ENCODE measurements at regions of chr5 and their contacts with region 1.

Region 1: GRCh38 chr5:91419571-91420537 is 36.7 kb upstream of the ARRDC3 start:
- DNase-seq: peak; percentile 55
- ATAC-seq: peak; percentile 50
- H3K4me3 ChIP-seq: no peak overlapping the region
- H3K27ac ChIP-seq: no peak overlapping the region
- H3K4me1 ChIP-seq: no peaks in the 10 kb centered on the region
- H3K27me3 ChIP-seq: no peaks in the 10 kb centered on the region
- CTCF ChIP-seq: peak; percentile 73
- POLR2A ChIP-seq: no peak
- RAD21 ChIP-seq: peak; percentile 76

Region 2: DNA sequence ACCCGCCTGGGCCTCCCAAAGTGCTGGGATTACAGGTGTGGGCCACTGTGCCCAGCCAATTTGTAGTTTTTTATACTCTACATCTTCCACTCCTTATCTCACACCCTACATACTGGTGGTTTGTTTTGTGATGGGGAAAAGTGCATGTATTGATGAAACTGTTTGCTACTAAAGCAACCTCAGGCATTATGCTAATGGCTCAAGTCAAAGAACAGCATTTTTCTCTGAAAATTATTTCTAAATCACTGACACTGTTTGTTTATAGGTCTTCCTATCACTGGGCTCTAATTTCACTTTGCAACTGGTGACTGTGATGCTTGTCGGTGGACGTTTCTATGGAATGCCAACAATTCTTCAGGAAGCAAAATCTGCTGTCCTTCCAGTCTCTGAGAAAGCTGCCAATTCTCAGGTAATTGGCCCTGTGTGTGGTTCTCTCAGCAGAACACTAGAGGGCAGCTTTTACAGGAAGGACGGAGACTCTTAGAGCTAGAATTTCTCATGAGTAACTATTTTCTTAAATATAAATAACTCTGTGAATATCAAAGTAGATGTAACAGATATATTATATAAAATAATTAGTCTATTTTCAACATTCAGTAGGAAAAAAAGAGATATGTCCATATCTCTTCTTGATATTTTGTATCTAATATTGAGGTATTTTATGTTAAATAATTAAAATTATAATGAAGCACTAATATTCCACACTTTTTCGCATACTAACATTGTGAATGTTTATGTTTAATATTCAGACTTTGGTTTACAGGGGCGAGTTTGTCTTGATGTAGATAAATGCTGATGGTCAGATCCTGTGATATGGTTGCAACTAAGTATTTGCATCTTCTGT is 617.2 kb before region 1 on chr5:
- CTCF ChIA-PET with region 1: interaction called, 9 read pairs
- POLR2A ChIA-PET with region 1: no interaction called
- dilution Hi-C with region 1: no loop called
- in situ Hi-C with region 1: no loop called
- intact Hi-C with region 1: loop called (anchors 2 kb)
- DNase-seq: peak; percentile 32
- ATAC-seq: peak; percentile 68
- H3K4me3 ChIP-seq: no peak overlapping the region
- H3K27ac ChIP-seq: no peak overlapping the region
- H3K4me1 ChIP-seq: no peaks in the 10 kb centered on the region
- H3K27me3 ChIP-seq: no peaks in the 10 kb centered on the region; the same call in 1 of the 2 replicates
- CTCF ChIP-seq: peak; percentile 61
- POLR2A ChIP-seq: no peak
- RAD21 ChIP-seq: peak; percentile 30; the same call in 1 of the 2 replicates

Region 3: DNA sequence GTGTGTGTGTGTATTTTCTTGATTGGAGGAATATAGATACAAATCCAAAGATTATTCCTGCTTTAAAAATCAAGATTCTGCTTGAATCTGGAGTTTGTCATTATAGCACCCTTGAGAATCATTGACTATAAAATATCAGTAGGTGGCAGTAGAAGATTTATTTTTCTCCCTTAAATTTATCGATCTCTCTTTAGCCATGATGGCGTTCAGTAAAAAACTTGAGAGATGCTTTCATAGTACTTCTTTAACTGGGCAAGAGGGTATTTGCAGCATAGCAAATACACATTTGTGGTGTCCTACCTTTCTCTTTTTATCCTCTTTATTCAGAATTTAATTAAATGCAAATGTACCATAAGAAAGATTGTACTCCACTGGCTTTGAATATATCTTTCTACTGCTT is 553.5 kb before region 1 on chr5:
- CTCF ChIA-PET with region 1: interaction called, 21 read pairs
- POLR2A ChIA-PET with region 1: no interaction called
- dilution Hi-C with region 1: loop called (anchors 25 kb)
- in situ Hi-C with region 1: loop called (anchors 5 kb)
- intact Hi-C with region 1: loop called (anchors 1 kb)
- DNase-seq: peak; percentile 28
- ATAC-seq: peak; percentile 70
- H3K4me3 ChIP-seq: no peak overlapping the region
- H3K27ac ChIP-seq: no peak overlapping the region
- H3K4me1 ChIP-seq: no peaks in the 10 kb centered on the region; the same call in 1 of the 2 replicates
- H3K27me3 ChIP-seq: no peaks in the 10 kb centered on the region
- CTCF ChIP-seq: peak; percentile 60
- POLR2A ChIP-seq: no peak
- RAD21 ChIP-seq: peak; percentile 54